Activated T-helper 1 cell treated with anti-CD3 and anti-CD28 coated beads, Interleukin-12 subunit alpha, Interleukin-12 subunit beta, Interleukin-2, Interleukin-4 antibody, amounts not matched to agents 30 ng/mL and 10 ng/mL and 1 ng/mL, durations not matched to agents 14 hours and 24 hours and 36 hours (primary cell): ENCODE measurements at regions of chr5 and their contacts with region 1.

Region 1: GRCh38 chr5:63262185-63262981 is 683.8 kb downstream of the LRRC70 start:
- DNase-seq: no peak
- H3K4me3 Mint-ChIP-seq: no peak overlapping the region
- H3K27ac Mint-ChIP-seq: no peak overlapping the region
- H3K4me1 Mint-ChIP-seq: no peaks in the 10 kb centered on the region
- H3K27me3 Mint-ChIP-seq: no peaks in the 10 kb centered on the region

Region 2: GRCh38 chr5:62985749-62986148 is 276.6 kb before region 1 on chr5:
- intact Hi-C with region 1: loop called (anchors 5 kb)
- DNase-seq: no peak
- H3K4me3 Mint-ChIP-seq: no peak overlapping the region
- H3K27ac Mint-ChIP-seq: no peak overlapping the region
- H3K4me1 Mint-ChIP-seq: no peaks in the 10 kb centered on the region
- H3K27me3 Mint-ChIP-seq: no peaks in the 10 kb centered on the region